CD4-positive, alpha-beta memory T cell (primary cell): ENCODE measurements at regions of chr5 and their contacts with region 1.

Region 1: DNA sequence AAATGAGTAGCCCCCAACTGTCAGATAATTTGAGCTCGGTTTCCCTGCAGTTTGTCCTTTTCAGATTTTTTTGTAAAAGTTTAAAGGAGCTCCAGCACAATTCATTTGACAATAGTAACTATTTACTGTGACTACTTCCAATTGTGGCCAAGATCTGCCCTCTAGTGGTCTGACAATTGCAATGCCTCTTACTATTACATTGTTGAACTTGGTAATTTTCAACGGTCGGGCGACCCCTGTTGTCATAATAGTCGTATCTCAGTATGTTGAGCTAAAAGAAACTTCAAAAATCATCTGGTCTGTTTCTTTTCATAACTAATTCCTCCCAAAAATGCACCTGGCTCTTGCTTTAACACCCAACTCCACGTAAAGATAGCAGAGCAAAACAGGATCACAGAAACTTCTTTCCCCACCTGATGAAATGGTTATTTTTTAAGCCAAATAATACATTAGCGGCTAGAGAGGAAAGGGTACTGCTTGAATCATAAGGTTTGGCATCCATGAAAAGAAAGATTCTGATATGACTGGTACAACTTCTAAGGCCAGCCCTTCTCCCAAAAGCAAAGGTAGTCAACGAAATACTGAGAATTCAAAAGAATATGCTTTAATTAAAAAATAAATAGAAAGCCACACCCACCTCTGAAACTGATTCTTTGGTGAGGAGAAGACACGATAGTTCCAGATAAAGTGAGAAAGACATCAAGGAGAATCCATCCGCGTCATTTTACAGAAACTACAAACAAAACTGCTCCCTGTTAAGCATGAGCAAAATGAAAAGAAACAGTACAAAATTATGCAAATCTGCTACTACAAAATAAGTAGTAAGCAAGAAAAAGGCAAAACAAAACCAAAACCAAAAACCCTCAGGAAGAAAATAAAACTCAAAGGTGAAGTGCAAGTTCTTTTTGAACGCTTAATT is 76.9 kb upstream of the HTR4 start:
- DNase-seq: peak; percentile 68 to 76 (median 72)
- H3K4me3 ChIP-seq: peak overlapping the region in 1 of 2 donors; percentile 36
- H3K4me3 Mint-ChIP-seq: peak overlapping the region; percentile 77 to 88 (median 84)
- H3K27ac ChIP-seq: no peak overlapping the region
- H3K27ac Mint-ChIP-seq: peak overlapping the region in 5 of 7 donors; percentile 55 to 83 (median 61)
- H3K4me1 ChIP-seq: peaks cover 10% of the 10 kb centered on the region
- H3K4me1 Mint-ChIP-seq: peaks cover 3 to 16% (median 11%) of the 10 kb centered on the region in 4 donors
- H3K27me3 ChIP-seq: no peaks in the 10 kb centered on the region
- H3K27me3 Mint-ChIP-seq: peaks cover 1 to 3% of the 10 kb centered on the region in 2 donors

Region 2: GRCh38 chr5:147453875-147454814 is 1277.1 kb before region 1 on chr5:
- CTCF ChIA-PET with region 1: no interaction called
- POLR2A ChIA-PET with region 1: no interaction called
- intact Hi-C with region 1: loop called (anchors 5 kb)
- DNase-seq: peak in 4 of 5 donors; percentile 42 to 65 (median 54)
- H3K4me3 ChIP-seq: peak overlapping the region; percentile 10 to 35
- H3K4me3 Mint-ChIP-seq: peak overlapping the region; percentile 74 to 89 (median 86)
- H3K27ac ChIP-seq: no peak overlapping the region
- H3K27ac Mint-ChIP-seq: peak overlapping the region in 1 of 7 donors; percentile 28
- H3K4me1 ChIP-seq: peaks cover 13% of the 10 kb centered on the region
- H3K4me1 Mint-ChIP-seq: peaks cover 7 to 18% (median 13%) of the 10 kb centered on the region in 4 donors
- H3K27me3 ChIP-seq: peaks cover 16% of the 10 kb centered on the region
- H3K27me3 Mint-ChIP-seq: peaks cover 44 to 52% of the 10 kb centered on the region in 2 donors

Region 3: DNA sequence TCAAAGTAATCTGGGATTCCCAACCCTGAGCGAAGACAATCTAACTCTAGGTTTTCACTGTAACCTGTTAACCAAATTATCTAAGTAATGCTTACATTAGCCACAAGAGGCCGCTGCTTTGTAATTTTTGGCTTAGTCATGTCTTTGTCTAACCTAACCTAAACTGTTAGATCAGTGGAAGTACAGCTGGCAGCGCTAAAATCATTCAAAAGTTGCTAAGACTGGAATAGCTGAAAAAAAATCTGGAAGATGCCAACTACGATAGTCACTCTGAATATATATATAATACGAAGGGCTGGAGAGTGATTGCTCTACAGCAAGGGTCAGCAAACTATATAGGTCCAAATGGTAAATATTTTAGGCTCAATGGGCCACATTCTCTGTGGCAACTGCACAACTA is 287.2 kb before region 1 on chr5:
- CTCF ChIA-PET with region 1: interaction called, 96 read pairs
- POLR2A ChIA-PET with region 1: no interaction called
- intact Hi-C with region 1: loop called (anchors 1 kb)
- DNase-seq: peak; percentile 42 to 48 (median 43)
- H3K4me3 ChIP-seq: no peak overlapping the region
- H3K4me3 Mint-ChIP-seq: no peak overlapping the region
- H3K27ac ChIP-seq: no peak overlapping the region
- H3K27ac Mint-ChIP-seq: no peak overlapping the region
- H3K4me1 ChIP-seq: no peaks in the 10 kb centered on the region
- H3K4me1 Mint-ChIP-seq: peaks cover 0 to 1% (median 0%) of the 10 kb centered on the region in 4 donors
- H3K27me3 ChIP-seq: no peaks in the 10 kb centered on the region
- H3K27me3 Mint-ChIP-seq: no peaks in the 10 kb centered on the region

Region 4: GRCh38 chr5:148746826-148747535 is 15.8 kb after region 1 on chr5:
- CTCF ChIA-PET with region 1: interaction called, 126 read pairs
- POLR2A ChIA-PET with region 1: no interaction called
- intact Hi-C with region 1: no loop called
- DNase-seq: no peak
- H3K4me3 ChIP-seq: no peak overlapping the region
- H3K4me3 Mint-ChIP-seq: no peak overlapping the region
- H3K27ac ChIP-seq: no peak overlapping the region
- H3K27ac Mint-ChIP-seq: no peak overlapping the region
- H3K4me1 ChIP-seq: no peaks in the 10 kb centered on the region
- H3K4me1 Mint-ChIP-seq: no peaks in the 10 kb centered on the region
- H3K27me3 ChIP-seq: no peaks in the 10 kb centered on the region
- H3K27me3 Mint-ChIP-seq: no peaks in the 10 kb centered on the region

Region 5: DNA sequence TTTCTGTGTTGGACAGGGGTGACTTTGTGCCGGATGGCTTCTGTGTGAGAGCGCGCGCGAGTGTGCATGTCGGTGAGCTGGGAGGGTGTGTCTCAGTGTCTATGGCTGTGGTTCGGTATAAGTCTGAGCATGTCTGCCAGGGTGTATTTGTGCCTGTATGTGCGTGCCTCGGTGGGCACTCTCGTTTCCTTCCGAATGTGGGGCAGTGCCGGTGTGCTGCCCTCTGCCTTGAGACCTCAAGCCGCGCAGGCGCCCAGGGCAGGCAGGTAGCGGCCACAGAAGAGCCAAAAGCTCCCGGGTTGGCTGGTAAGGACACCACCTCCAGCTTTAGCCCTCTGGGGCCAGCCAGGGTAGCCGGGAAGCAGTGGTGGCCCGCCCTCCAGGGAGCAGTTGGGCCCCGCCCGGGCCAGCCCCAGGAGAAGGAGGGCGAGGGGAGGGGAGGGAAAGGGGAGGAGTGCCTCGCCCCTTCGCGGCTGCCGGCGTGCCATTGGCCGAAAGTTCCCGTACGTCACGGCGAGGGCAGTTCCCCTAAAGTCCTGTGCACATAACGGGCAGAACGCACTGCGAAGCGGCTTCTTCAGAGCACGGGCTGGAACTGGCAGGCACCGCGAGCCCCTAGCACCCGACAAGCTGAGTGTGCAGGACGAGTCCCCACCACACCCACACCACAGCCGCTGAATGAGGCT is 95.0 kb after region 1 on chr5 and contains the start of gene ADRB2:
- CTCF ChIA-PET with region 1: interaction called, 10 read pairs
- POLR2A ChIA-PET with region 1: no interaction called
- intact Hi-C with region 1: loop called (anchors 5 kb)
- DNase-seq: peak; percentile 87 to 93 (median 88)
- H3K4me3 ChIP-seq: peak within 1 kb of the TSS; percentile 72 to 92
- H3K4me3 Mint-ChIP-seq: peak within 1 kb of the TSS; percentile 86 to 95 (median 90)
- H3K27ac ChIP-seq: peak within 1 kb of the TSS; percentile 67
- H3K27ac Mint-ChIP-seq: peak within 1 kb of the TSS; percentile 79 to 97 (median 93)
- H3K4me1 ChIP-seq: peaks cover 39% of the 10 kb centered on the region
- H3K4me1 Mint-ChIP-seq: peaks cover 19 to 61% (median 35%) of the 10 kb centered on the region in 4 donors
- H3K27me3 ChIP-seq: no peaks in the 10 kb centered on the region
- H3K27me3 Mint-ChIP-seq: no peaks in the 10 kb centered on the region
- total RNA-seq, gene ADRB2: 5.6 to 6.1 TPM

Region 6: DNA sequence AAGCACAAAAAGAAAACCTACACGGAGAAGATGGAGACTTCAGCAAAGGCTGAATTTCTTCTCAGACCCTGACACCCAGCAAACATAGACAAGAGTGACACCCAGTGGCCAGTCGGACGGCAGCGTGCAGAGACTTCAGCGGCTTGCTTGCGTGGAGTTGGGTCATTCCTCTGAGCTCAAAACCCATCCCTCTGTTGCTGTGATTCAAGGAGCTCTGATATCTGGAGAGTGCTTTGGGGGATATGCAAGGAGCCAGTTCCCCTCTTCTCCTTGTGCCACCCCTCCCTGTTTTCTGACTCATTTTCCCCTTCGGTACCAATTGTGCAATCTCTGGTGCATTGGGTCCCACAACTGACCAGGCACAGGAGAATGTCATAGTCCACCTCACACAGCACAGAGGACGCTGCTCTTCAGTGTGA is 304.2 kb after region 1 on chr5:
- CTCF ChIA-PET with region 1: interaction called, 400 read pairs
- POLR2A ChIA-PET with region 1: interaction called, 3 read pairs
- intact Hi-C with region 1: loop called (anchors 1 kb)
- DNase-seq: peak; percentile 55 to 66 (median 57)
- H3K4me3 ChIP-seq: no peak overlapping the region
- H3K4me3 Mint-ChIP-seq: peak overlapping the region in 1 of 8 donors; percentile 22
- H3K27ac ChIP-seq: no peak overlapping the region
- H3K27ac Mint-ChIP-seq: peak overlapping the region in 1 of 7 donors; percentile 27
- H3K4me1 ChIP-seq: peaks cover 10% of the 10 kb centered on the region
- H3K4me1 Mint-ChIP-seq: peaks cover 3 to 38% (median 19%) of the 10 kb centered on the region in 4 donors
- H3K27me3 ChIP-seq: no peaks in the 10 kb centered on the region
- H3K27me3 Mint-ChIP-seq: peaks cover 0 to 3% of the 10 kb centered on the region in 2 donors